ENCODE measurements at regions of chr22 and their contacts with region 1.

Region 1: GRCh38 chr22:39395936-39396796 is 3.4 kb upstream of the TAB1 start:
- DNase-seq: no peak
- ATAC-seq: no peak
- H3K4me3 ChIP-seq: no peak overlapping the region
- H3K4me3 Mint-ChIP-seq: no peak overlapping the region
- H3K27ac ChIP-seq: no peak overlapping the region
- H3K27ac Mint-ChIP-seq: no peak overlapping the region
- H3K4me1 ChIP-seq: peaks cover 9 to 16% of the 10 kb centered on the region in 2 donors
- H3K4me1 Mint-ChIP-seq: peaks cover 15% of the 10 kb centered on the region
- H3K27me3 ChIP-seq: no peaks in the 10 kb centered on the region
- H3K27me3 Mint-ChIP-seq: no peaks in the 10 kb centered on the region
- CTCF ChIP-seq: no peak

Region 2: GRCh38 chr22:38681784-38682335 is 714.3 kb before region 1 on chr22 and contains the start of gene TOMM22:
- CTCF ChIA-PET with region 1: interaction called, 3 read pairs
- POLR2A ChIA-PET with region 1: no interaction called
- intact Hi-C with region 1: loop called (anchors 5 kb)
- DNase-seq: peak; percentile 91
- ATAC-seq: peak; percentile 98
- H3K4me3 ChIP-seq: peak within 1 kb of the TSS; percentile 78 to 96 (median 87)
- H3K4me3 Mint-ChIP-seq: peak within 1 kb of the TSS; percentile 100
- H3K27ac ChIP-seq: peak within 1 kb of the TSS; percentile 70 to 88
- H3K27ac Mint-ChIP-seq: peak within 1 kb of the TSS; percentile 96
- H3K4me1 ChIP-seq: peaks cover 11 to 15% of the 10 kb centered on the region in 2 donors
- H3K4me1 Mint-ChIP-seq: peaks cover 22% of the 10 kb centered on the region
- H3K27me3 ChIP-seq: no peaks in the 10 kb centered on the region
- H3K27me3 Mint-ChIP-seq: no peaks in the 10 kb centered on the region
- CTCF ChIP-seq: peak; percentile 72
- total RNA-seq, gene TOMM22: 47.6 and 48.2 TPM in 2 replicates

Region 3: GRCh38 chr22:39349506-39349966 is 46.6 kb before region 1 on chr22:
- CTCF ChIA-PET with region 1: interaction called, 21 read pairs
- POLR2A ChIA-PET with region 1: interaction called, 9 read pairs
- intact Hi-C with region 1: loop called (anchors 1 kb)
- DNase-seq: peak; percentile 73
- ATAC-seq: peak; percentile 21
- H3K4me3 ChIP-seq: peak overlapping the region; percentile 66 to 83 (median 69)
- H3K4me3 Mint-ChIP-seq: peak overlapping the region; percentile 95
- H3K27ac ChIP-seq: peak overlapping the region; percentile 4 to 45
- H3K27ac Mint-ChIP-seq: peak overlapping the region; percentile 94
- H3K4me1 ChIP-seq: peaks cover 31 to 37% of the 10 kb centered on the region in 2 donors
- H3K4me1 Mint-ChIP-seq: peaks cover 35% of the 10 kb centered on the region
- H3K27me3 ChIP-seq: no peaks in the 10 kb centered on the region
- H3K27me3 Mint-ChIP-seq: no peaks in the 10 kb centered on the region
- CTCF ChIP-seq: no peak

Region 4: GRCh38 chr22:39471381-39472141 is 75.4 kb after region 1 on chr22:
- CTCF ChIA-PET with region 1: interaction called, 4 read pairs
- POLR2A ChIA-PET with region 1: interaction called, 4 read pairs
- intact Hi-C with region 1: loop called (anchors 1 kb)
- DNase-seq: peak; percentile 43
- ATAC-seq: peak; percentile 60
- H3K4me3 ChIP-seq: peak overlapping the region in 1 of 5 experiments; percentile 14
- H3K4me3 Mint-ChIP-seq: peak overlapping the region; percentile 85
- H3K27ac ChIP-seq: peak overlapping the region; percentile 40 to 68
- H3K27ac Mint-ChIP-seq: peak overlapping the region; percentile 89
- H3K4me1 ChIP-seq: peaks cover 41 to 69% of the 10 kb centered on the region in 2 donors
- H3K4me1 Mint-ChIP-seq: peaks cover 64% of the 10 kb centered on the region
- H3K27me3 ChIP-seq: no peaks in the 10 kb centered on the region
- H3K27me3 Mint-ChIP-seq: no peaks in the 10 kb centered on the region
- CTCF ChIP-seq: no peak

Region 5: GRCh38 chr22:39496131-39496838 is 100.1 kb after region 1 on chr22:
- CTCF ChIA-PET with region 1: interaction called, 13 read pairs
- POLR2A ChIA-PET with region 1: no interaction called
- intact Hi-C with region 1: no loop called
- DNase-seq: peak; percentile 62
- ATAC-seq: peak; percentile 75
- H3K4me3 ChIP-seq: no peak overlapping the region
- H3K4me3 Mint-ChIP-seq: no peak overlapping the region
- H3K27ac ChIP-seq: no peak overlapping the region
- H3K27ac Mint-ChIP-seq: peak overlapping the region; percentile 70
- H3K4me1 ChIP-seq: peaks cover 4 to 7% of the 10 kb centered on the region in 2 donors
- H3K4me1 Mint-ChIP-seq: peaks cover 16% of the 10 kb centered on the region
- H3K27me3 ChIP-seq: no peaks in the 10 kb centered on the region
- H3K27me3 Mint-ChIP-seq: no peaks in the 10 kb centered on the region
- CTCF ChIP-seq: peak; percentile 73

Region 6: GRCh38 chr22:39520054-39520891 is 124.1 kb after region 1 on chr22 and contains the start of gene ATF4:
- CTCF ChIA-PET with region 1: interaction called, 11 read pairs
- POLR2A ChIA-PET with region 1: interaction called, 12 read pairs
- intact Hi-C with region 1: loop called (anchors 1 kb)
- DNase-seq: peak; percentile 100
- ATAC-seq: peak; percentile 89
- H3K4me3 ChIP-seq: peak within 1 kb of the TSS; percentile 82 to 100 (median 99)
- H3K4me3 Mint-ChIP-seq: peak within 1 kb of the TSS; percentile 94
- H3K27ac ChIP-seq: peak within 1 kb of the TSS; percentile 91 to 95
- H3K27ac Mint-ChIP-seq: peak within 1 kb of the TSS; percentile 98
- H3K4me1 ChIP-seq: peaks cover 31 to 49% of the 10 kb centered on the region in 2 donors
- H3K4me1 Mint-ChIP-seq: peaks cover 59% of the 10 kb centered on the region
- H3K27me3 ChIP-seq: no peaks in the 10 kb centered on the region
- H3K27me3 Mint-ChIP-seq: no peaks in the 10 kb centered on the region
- CTCF ChIP-seq: no peak
- total RNA-seq, gene ATF4: 236 and 244 TPM in 2 replicates

Region 7: DNA sequence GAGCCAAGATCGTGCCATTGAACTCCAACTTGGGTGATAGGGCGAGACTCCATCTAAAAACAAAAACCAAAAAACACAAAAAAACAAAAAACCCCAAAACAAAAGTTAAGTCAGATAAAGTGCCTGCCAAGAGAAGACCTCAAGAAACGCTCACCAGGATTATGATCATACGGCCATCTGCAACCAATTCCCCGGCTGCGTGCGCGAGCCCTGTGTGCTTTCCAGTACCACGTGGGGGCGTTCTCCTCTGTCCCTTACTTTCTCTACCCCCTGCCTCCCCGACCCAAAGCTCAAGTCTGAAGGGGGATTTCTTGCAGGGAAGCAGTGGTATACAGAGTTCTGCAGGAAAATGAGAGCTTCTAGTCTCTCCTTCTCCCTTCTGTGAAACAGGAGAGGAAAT is 146.9 kb after region 1 on chr22:
- CTCF ChIA-PET with region 1: no interaction called
- POLR2A ChIA-PET with region 1: no interaction called
- intact Hi-C with region 1: no loop called
- DNase-seq: peak; percentile 51
- ATAC-seq: no peak
- H3K4me3 ChIP-seq: no peak overlapping the region
- H3K4me3 Mint-ChIP-seq: no peak overlapping the region
- H3K27ac ChIP-seq: no peak overlapping the region
- H3K27ac Mint-ChIP-seq: no peak overlapping the region
- H3K4me1 ChIP-seq: peaks cover 0 to 8% of the 10 kb centered on the region in 2 donors
- H3K4me1 Mint-ChIP-seq: peaks cover 4% of the 10 kb centered on the region
- H3K27me3 ChIP-seq: peaks cover 0 to 42% (median 19%) of the 10 kb centered on the region in 4 experiments
- H3K27me3 Mint-ChIP-seq: peaks cover 44% of the 10 kb centered on the region
- CTCF ChIP-seq: peak; percentile 30

Region 8: GRCh38 chr22:39612811-39613548 is 216.8 kb after region 1 on chr22:
- CTCF ChIA-PET with region 1: no interaction called
- POLR2A ChIA-PET with region 1: no interaction called
- intact Hi-C with region 1: no loop called
- DNase-seq: no peak
- ATAC-seq: no peak
- H3K4me3 ChIP-seq: no peak overlapping the region
- H3K4me3 Mint-ChIP-seq: no peak overlapping the region
- H3K27ac ChIP-seq: no peak overlapping the region
- H3K27ac Mint-ChIP-seq: no peak overlapping the region
- H3K4me1 ChIP-seq: peaks cover 0 to 3% of the 10 kb centered on the region in 2 donors
- H3K4me1 Mint-ChIP-seq: peaks cover 7% of the 10 kb centered on the region
- H3K27me3 ChIP-seq: peaks cover 0 to 53% (median 6%) of the 10 kb centered on the region in 4 experiments
- H3K27me3 Mint-ChIP-seq: peaks cover 41% of the 10 kb centered on the region
- CTCF ChIP-seq: no peak